Right cardiac atrium (tissue), 5 donors: ENCODE measurements at regions of chr18 and their contacts with region 1.

Region 1: DNA sequence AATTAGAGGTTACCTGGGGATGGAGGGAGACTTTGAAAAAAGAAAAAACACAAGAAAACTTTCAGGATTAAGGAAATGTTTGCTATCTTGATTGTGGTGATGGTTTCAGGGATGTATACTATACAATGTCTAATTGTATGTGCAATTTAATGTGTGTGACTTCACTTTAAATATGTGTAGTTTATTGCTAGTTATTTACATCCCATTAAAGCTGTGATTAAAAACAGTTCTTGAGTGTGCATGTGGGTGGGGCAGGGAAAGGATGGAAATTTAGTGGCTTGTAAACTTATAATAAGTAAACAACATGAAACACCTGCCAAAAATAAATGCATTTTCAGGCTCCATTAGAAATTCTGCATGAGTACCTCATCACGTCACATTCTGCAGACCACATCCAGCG is 167.0 kb downstream of the MYO5B start:
- DNase-seq: no peak
- ATAC-seq: no peak
- H3K4me3 ChIP-seq: no peak overlapping the region
- H3K27ac ChIP-seq: no peak overlapping the region
- H3K4me1 ChIP-seq: no peaks in the 10 kb centered on the region
- H3K27me3 ChIP-seq: no peaks in the 10 kb centered on the region

Region 2: GRCh38 chr18:49967171-49967570 is 60.8 kb before region 1 on chr18:
- intact Hi-C with region 1: loop called in 1 of 4 experiments (anchors 10 kb)
- DNase-seq: no peak
- ATAC-seq: no peak
- H3K4me3 ChIP-seq: no peak overlapping the region
- H3K27ac ChIP-seq: no peak overlapping the region
- H3K4me1 ChIP-seq: no peaks in the 10 kb centered on the region
- H3K27me3 ChIP-seq: no peaks in the 10 kb centered on the region